Caco-2 (cell line): ENCODE measurements at regions of chr3 and their contacts with region 1.

Region 1: GRCh38 chr3:48765376-48765775 is 48.4 kb upstream of the IP6K2 start:
- DNase-seq: no peak
- H3K4me3 ChIP-seq: no peak overlapping the region
- H3K4me3 Mint-ChIP-seq: no peak overlapping the region
- H3K27ac Mint-ChIP-seq: no peak overlapping the region
- H3K4me1 ChIP-seq: no peaks in the 10 kb centered on the region
- H3K4me1 Mint-ChIP-seq: no peaks in the 10 kb centered on the region
- H3K27me3 ChIP-seq: no peaks in the 10 kb centered on the region
- H3K27me3 Mint-ChIP-seq: no peaks in the 10 kb centered on the region
- CTCF ChIP-seq: peak in 1 of 2 experiments; percentile 24

Region 2: DNA sequence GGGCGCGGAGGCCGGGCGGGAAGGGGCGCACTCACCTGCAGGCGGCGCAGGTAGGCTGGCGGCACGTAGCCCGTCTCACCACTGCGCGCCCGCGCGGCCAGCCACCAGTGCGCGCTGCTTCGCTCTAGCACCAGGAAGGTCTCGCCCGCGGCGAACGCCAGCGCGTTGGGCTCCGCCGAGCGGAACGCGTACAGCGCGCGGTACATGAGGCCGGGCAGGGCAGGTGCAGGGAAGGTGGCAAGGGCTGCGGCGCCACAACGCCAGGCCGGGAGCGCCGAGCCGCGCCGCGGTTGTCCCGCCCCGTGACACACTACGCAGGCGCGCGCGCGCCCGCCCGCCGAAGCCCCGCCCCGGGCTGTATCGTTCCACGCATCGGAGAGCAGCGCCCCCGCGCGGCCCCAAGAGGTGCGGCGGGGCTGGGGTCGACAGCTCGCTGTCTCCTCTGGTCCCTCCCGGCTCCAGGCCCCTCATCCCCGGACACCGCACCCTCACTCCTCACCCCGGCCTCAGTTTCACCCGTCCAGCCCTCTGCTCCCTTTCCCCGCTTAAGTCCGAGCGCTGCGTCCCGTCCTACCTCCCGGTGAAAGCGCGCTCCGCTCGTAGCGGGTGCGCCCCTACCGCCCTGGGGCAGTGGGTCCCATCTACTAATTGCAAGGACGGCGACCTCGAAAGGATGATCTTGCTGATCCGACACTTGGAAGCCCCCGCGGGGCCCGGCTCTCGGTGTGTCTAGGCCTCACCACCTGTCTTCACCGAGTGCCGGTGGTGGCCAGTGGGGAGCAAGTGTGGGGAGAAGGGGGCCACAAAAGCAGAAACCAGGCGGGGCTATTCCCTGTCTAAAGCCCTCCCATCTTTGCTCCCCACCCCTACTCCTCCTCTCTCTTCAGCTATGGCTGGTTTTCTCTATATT is 79.5 kb before region 1 on chr3 and contains the start of gene NCKIPSD:
- CTCF ChIA-PET with region 1: interaction called, 18 read pairs
- POLR2A ChIA-PET with region 1: no interaction called
- intact Hi-C with region 1: no loop called
- DNase-seq: peak; percentile 83 to 90
- H3K4me3 ChIP-seq: peak within 1 kb of the TSS; percentile 55
- H3K4me3 Mint-ChIP-seq: peak within 1 kb of the TSS; percentile 86
- H3K27ac Mint-ChIP-seq: peak within 1 kb of the TSS; percentile 84
- H3K4me1 ChIP-seq: peaks cover 7% of the 10 kb centered on the region
- H3K4me1 Mint-ChIP-seq: peaks cover 14% of the 10 kb centered on the region
- H3K27me3 ChIP-seq: no peaks in the 10 kb centered on the region
- H3K27me3 Mint-ChIP-seq: no peaks in the 10 kb centered on the region
- CTCF ChIP-seq: peak; percentile 58 to 88
- total RNA-seq, gene NCKIPSD: 30.1 and 30.2 TPM in 2 replicates

Region 3: GRCh38 chr3:48974076-48974864 is 208.9 kb after region 1 on chr3:
- CTCF ChIA-PET with region 1: no interaction called
- POLR2A ChIA-PET with region 1: no interaction called
- intact Hi-C with region 1: no loop called
- DNase-seq: no peak
- H3K4me3 ChIP-seq: no peak overlapping the region
- H3K4me3 Mint-ChIP-seq: no peak overlapping the region
- H3K27ac Mint-ChIP-seq: no peak overlapping the region
- H3K4me1 ChIP-seq: no peaks in the 10 kb centered on the region
- H3K4me1 Mint-ChIP-seq: no peaks in the 10 kb centered on the region
- H3K27me3 ChIP-seq: no peaks in the 10 kb centered on the region
- H3K27me3 Mint-ChIP-seq: no peaks in the 10 kb centered on the region
- CTCF ChIP-seq: no peak